MCF 10A (cell line): ENCODE measurements at regions of chr14 and their contacts with region 1.

Region 1: GRCh38 chr14:47539031-47539461 is 136.4 kb downstream of the MDGA2 start:
- DNase-seq: peak; percentile 18
- H3K4me3 Mint-ChIP-seq: no peak overlapping the region
- H3K27ac Mint-ChIP-seq: no peak overlapping the region
- H3K4me1 Mint-ChIP-seq: no peaks in the 10 kb centered on the region
- H3K27me3 Mint-ChIP-seq: peaks cover 73% of the 10 kb centered on the region
- CTCF ChIP-seq: peak; percentile 48

Region 2: DNA sequence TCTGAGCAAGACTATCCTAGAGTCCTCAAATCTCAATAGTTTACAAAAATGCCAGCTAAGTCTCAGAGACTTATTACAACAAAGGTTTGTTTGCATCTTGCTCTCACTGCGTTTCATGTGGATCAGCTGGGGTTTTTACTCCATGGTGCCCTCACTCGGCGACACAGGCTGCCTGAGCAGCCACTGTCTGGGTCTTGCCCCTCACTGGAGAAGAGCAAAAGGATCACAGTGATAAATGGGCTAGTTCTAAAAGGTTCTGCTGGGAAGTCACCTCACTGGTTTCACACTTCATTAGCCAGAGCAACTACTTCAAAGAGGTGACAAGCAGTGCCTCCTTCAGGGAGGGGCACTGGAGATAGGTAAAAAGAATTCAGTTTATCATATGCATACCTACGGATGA is 1279.5 kb before region 1 on chr14:
- CTCF ChIA-PET with region 1: no interaction called
- POLR2A ChIA-PET with region 1: no interaction called
- intact Hi-C with region 1: loop called (anchors 5 kb)
- DNase-seq: peak; percentile 8
- H3K4me3 Mint-ChIP-seq: no peak overlapping the region
- H3K27ac Mint-ChIP-seq: no peak overlapping the region
- H3K4me1 Mint-ChIP-seq: no peaks in the 10 kb centered on the region
- H3K27me3 Mint-ChIP-seq: peaks cover 65% of the 10 kb centered on the region
- CTCF ChIP-seq: no peak

Region 3: DNA sequence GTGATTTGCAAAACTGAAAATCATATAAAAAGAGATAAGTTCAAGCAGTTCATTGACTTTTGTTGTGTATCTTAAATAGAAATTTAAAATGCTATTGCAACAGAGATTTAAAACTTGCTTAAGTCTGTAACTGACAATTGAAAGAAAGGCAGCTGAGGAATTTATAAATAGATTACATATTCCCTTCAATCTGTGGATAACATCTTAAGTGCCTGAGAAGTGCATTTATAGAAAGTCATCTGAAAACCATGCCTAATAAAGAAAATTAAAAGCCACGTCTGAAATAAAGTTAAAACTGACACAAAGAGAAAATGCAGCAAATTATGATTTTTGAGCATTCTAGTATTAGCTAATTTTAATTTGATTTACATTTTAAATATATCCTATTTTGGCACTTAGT is 343.5 kb before region 1 on chr14:
- CTCF ChIA-PET with region 1: no interaction called
- POLR2A ChIA-PET with region 1: no interaction called
- intact Hi-C with region 1: loop called (anchors 5 kb)
- DNase-seq: no peak
- H3K4me3 Mint-ChIP-seq: no peak overlapping the region
- H3K27ac Mint-ChIP-seq: no peak overlapping the region
- H3K4me1 Mint-ChIP-seq: no peaks in the 10 kb centered on the region
- H3K27me3 Mint-ChIP-seq: peaks cover 34% of the 10 kb centered on the region
- CTCF ChIP-seq: no peak

Region 4: GRCh38 chr14:47442209-47442608 is 96.8 kb before region 1 on chr14:
- CTCF ChIA-PET with region 1: no interaction called
- POLR2A ChIA-PET with region 1: no interaction called
- intact Hi-C with region 1: loop called (anchors 1 kb)
- DNase-seq: peak; percentile 62
- H3K4me3 Mint-ChIP-seq: no peak overlapping the region
- H3K27ac Mint-ChIP-seq: no peak overlapping the region
- H3K4me1 Mint-ChIP-seq: no peaks in the 10 kb centered on the region
- H3K27me3 Mint-ChIP-seq: peaks cover 73% of the 10 kb centered on the region
- CTCF ChIP-seq: peak; percentile 32